Heart left ventricle (tissue), 16 donors: ENCODE measurements at regions of chr19 and their contacts with region 1.

Region 1: DNA sequence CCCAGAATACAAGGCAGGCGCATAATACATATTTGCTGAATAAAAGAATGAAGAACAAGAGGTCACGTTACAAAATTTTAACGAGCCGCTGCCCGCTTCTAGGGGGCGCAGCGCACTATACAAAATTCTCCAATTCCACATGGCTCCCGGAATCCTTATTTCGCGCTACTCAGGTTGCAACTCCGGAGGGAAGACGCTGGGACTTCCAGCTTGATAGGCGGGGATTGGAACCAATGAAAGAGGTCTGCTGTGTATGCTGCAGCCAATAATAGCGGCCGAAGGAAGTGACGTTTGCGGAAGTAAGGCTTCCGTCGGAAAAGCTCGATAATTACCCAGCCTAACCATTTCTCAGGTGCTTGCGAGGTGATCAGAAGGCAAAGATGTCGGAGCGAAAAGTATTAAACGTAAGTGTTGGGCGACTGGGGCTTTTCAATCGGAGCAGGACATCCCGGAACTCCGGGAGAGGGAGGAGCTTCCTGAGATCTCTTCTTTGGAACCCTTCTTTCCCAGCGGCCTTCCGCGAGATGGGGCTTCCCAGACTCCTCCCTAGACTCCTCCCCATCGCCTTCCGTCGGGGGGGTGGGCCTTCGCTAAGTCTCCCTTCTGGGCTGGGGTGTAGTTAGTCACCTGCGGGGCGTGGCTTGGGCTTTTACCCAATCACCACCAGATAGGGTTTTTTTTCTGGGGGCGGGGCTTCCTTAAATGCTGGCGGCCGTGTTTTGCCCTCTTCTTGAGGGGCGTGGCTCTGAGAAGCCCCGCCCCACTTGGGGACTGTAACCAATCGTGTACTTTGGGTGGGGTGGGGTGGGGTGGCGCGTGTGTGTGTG is at the start of gene YJU2:
- DNase-seq: peak; percentile 98 to 99 (median 99)
- ATAC-seq: peak; percentile 98 to 99 (median 99)
- H3K4me3 ChIP-seq: peak within 1 kb of the TSS; percentile 57 to 95 (median 76)
- H3K27ac ChIP-seq: peak within 1 kb of the TSS; percentile 93 to 99 (median 97)
- H3K4me1 ChIP-seq: peaks cover 0 to 15% (median 7%) of the 10 kb centered on the region in 12 donors
- H3K27me3 ChIP-seq: no peaks in the 10 kb centered on the region
- CTCF ChIP-seq: peak in 11 of 12 donors; percentile 11 to 65 (median 38)
- POLR2A ChIP-seq: peak in 1 of 2 donors; percentile 46
- total RNA-seq, gene YJU2: 7.6 to 19.1 (median 10.4) TPM

Region 2: DNA sequence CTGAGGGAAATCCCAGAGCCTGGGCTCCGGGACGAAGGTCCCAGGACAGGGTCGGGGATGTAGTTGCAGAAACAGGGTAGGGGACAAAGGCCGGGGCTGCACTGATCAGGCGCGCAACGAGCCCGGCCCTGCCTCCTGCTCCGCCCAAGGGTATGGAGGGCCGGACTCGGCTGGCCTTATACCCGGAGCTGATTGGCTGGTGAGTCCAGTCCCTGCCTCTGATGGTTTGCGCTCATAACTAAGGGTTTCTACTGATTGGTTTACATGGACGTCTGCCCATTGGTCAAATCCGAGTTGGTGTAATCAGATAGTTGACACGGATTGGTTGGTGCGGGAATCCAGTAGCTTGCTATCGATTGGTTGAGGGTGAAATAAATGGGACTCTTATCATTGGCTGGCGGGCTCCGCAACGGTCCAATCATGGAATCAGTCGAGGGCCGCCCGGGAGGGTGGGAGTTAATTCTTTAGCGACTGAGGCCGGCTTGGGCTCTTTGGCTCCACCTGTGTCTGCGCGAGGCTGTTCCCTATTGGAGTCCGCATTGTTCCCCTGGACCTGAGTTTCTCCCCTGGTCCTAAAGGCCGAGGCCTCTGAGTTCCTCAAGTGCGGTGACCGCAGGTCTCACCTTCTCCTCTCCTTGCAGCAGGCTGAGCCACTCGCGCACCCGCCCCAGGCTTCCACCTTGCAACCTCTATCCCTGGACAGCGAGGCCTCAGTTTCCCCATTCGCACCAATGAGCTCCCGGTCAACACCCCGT is 95.8 kb after region 1 on chr19:
- intact Hi-C with region 1: loop called in 2 of 10 experiments (anchors 1 to 5 kb)
- DNase-seq: peak; percentile 96 to 99 (median 97)
- ATAC-seq: peak; percentile 94 to 98 (median 96)
- H3K4me3 ChIP-seq: peak overlapping the region; percentile 38 to 100 (median 76)
- H3K27ac ChIP-seq: peak overlapping the region; percentile 70 to 99 (median 92)
- H3K4me1 ChIP-seq: peaks cover 0 to 27% (median 15%) of the 10 kb centered on the region in 12 donors
- H3K27me3 ChIP-seq: no peaks in the 10 kb centered on the region
- CTCF ChIP-seq: peak in 7 of 12 donors; percentile 7 to 54 (median 39)
- POLR2A ChIP-seq: peak; percentile 47 to 93